ENCODE measurements at regions of chr1 and their contacts with region 1.

Region 1: GRCh38 chr1:206583707-206584648 is 28.3 kb downstream of the EIF2D start:
- DNase-seq: peak; percentile 67
- ATAC-seq: no peak
- H3K4me3 Mint-ChIP-seq: peak overlapping the region; percentile 54
- H3K27ac Mint-ChIP-seq: peak overlapping the region; percentile 96
- H3K4me1 Mint-ChIP-seq: peaks cover 48% of the 10 kb centered on the region
- H3K27me3 Mint-ChIP-seq: no peaks in the 10 kb centered on the region
- CTCF ChIP-seq: peak; percentile 46

Region 2: GRCh38 chr1:206461602-206462455 is 122.1 kb before region 1 on chr1:
- CTCF ChIA-PET with region 1: interaction called, 18 read pairs
- POLR2A ChIA-PET with region 1: interaction called, 6 read pairs
- intact Hi-C with region 1: loop called (anchors 1 kb)
- DNase-seq: no peak
- ATAC-seq: peak; percentile 87
- H3K4me3 Mint-ChIP-seq: no peak overlapping the region
- H3K27ac Mint-ChIP-seq: no peak overlapping the region
- H3K4me1 Mint-ChIP-seq: peaks cover 17% of the 10 kb centered on the region
- H3K27me3 Mint-ChIP-seq: no peaks in the 10 kb centered on the region
- CTCF ChIP-seq: no peak

Region 3: GRCh38 chr1:206489980-206490770 is 93.8 kb before region 1 on chr1:
- CTCF ChIA-PET with region 1: interaction called, 42 read pairs
- POLR2A ChIA-PET with region 1: interaction called, 4 read pairs
- intact Hi-C with region 1: loop called (anchors 1 kb)
- DNase-seq: peak; percentile 66
- ATAC-seq: peak; percentile 95
- H3K4me3 Mint-ChIP-seq: no peak overlapping the region
- H3K27ac Mint-ChIP-seq: no peak overlapping the region
- H3K4me1 Mint-ChIP-seq: peaks cover 10% of the 10 kb centered on the region
- H3K27me3 Mint-ChIP-seq: no peaks in the 10 kb centered on the region
- CTCF ChIP-seq: no peak

Region 4: GRCh38 chr1:206507284-206508129 is 76.5 kb before region 1 on chr1 and contains the start of gene RASSF5:
- CTCF ChIA-PET with region 1: interaction called, 15 read pairs
- POLR2A ChIA-PET with region 1: interaction called, 9 read pairs
- intact Hi-C with region 1: no loop called
- DNase-seq: peak; percentile 80
- ATAC-seq: peak; percentile 91
- H3K4me3 Mint-ChIP-seq: peak within 1 kb of the TSS; percentile 82
- H3K27ac Mint-ChIP-seq: peak within 1 kb of the TSS; percentile 24
- H3K4me1 Mint-ChIP-seq: peaks cover 33% of the 10 kb centered on the region
- H3K27me3 Mint-ChIP-seq: peaks cover 17% of the 10 kb centered on the region
- CTCF ChIP-seq: no peak
- total RNA-seq, gene RASSF5: 114 and 116 TPM in 2 replicates

Region 5: GRCh38 chr1:206556750-206557635 is 27.0 kb before region 1 on chr1:
- CTCF ChIA-PET with region 1: interaction called, 132 read pairs
- POLR2A ChIA-PET with region 1: interaction called, 343 read pairs
- intact Hi-C with region 1: loop called (anchors 1 kb)
- DNase-seq: peak; percentile 83
- ATAC-seq: peak; percentile 78
- H3K4me3 Mint-ChIP-seq: peak overlapping the region; percentile 96
- H3K27ac Mint-ChIP-seq: peak overlapping the region; percentile 96
- H3K4me1 Mint-ChIP-seq: peaks cover 71% of the 10 kb centered on the region
- H3K27me3 Mint-ChIP-seq: no peaks in the 10 kb centered on the region
- CTCF ChIP-seq: no peak

Region 6: DNA sequence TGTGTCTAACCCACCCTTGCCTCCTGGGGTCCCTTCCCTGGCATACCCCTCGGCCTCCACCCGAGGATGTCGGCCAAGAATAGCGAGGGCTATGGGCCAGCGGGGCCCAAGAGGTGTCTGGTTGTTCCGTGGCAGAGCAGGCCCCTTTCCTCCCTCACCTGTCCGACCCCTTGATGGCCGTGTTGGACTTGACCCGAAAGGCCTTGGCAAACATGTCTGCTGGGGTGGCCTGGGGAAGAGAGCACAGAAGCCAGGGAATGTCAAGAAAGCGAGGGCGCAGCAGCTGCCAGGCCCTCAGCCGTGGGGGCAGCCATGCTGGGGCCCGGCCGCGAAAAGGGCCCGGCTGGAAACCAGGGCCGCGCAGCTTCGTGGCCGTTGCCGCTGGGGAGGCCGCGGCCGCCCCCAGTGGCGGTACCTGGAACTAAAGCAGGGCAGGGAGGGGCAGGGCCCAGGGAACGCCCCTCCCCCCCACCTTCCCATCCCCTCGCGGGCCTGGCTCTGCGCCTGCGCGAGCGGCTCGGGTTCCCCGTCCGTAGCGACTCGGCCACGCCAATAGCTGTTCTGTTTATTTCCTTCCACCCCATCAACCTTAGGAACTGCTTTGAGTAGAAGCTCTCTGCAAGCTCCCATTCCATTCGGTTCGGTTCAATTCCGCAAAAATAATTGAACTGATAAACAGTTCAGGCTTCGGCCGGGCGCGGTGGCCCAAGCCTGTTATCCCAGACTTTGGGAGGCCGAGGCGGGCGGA is 28.3 kb after region 1 on chr1 and contains the start of gene EIF2D:
- CTCF ChIA-PET with region 1: interaction called, 6 read pairs
- POLR2A ChIA-PET with region 1: interaction called, 12 read pairs
- intact Hi-C with region 1: loop called (anchors 2 kb)
- DNase-seq: peak; percentile 95
- ATAC-seq: peak; percentile 98
- H3K4me3 Mint-ChIP-seq: peak within 1 kb of the TSS; percentile 96
- H3K27ac Mint-ChIP-seq: peak within 1 kb of the TSS; percentile 97
- H3K4me1 Mint-ChIP-seq: peaks cover 30% of the 10 kb centered on the region
- H3K27me3 Mint-ChIP-seq: no peaks in the 10 kb centered on the region
- CTCF ChIP-seq: peak; percentile 72
- total RNA-seq, gene EIF2D: 61.2 and 65.4 TPM in 2 replicates

Region 7: GRCh38 chr1:206851341-206852010 is 267.5 kb after region 1 on chr1:
- CTCF ChIA-PET with region 1: no interaction called
- POLR2A ChIA-PET with region 1: no interaction called
- intact Hi-C with region 1: no loop called
- DNase-seq: no peak
- ATAC-seq: no peak
- H3K4me3 Mint-ChIP-seq: no peak overlapping the region
- H3K27ac Mint-ChIP-seq: no peak overlapping the region
- H3K4me1 Mint-ChIP-seq: no peaks in the 10 kb centered on the region
- H3K27me3 Mint-ChIP-seq: peaks cover 8% of the 10 kb centered on the region
- CTCF ChIP-seq: no peak

Measured in activated B cell treated with CpG ODN at 0.5 μM for 24 hours (primary cell).